PC-3 (cell line): ENCODE measurements at regions of chr3 and their contacts with region 1.

Region 1: GRCh38 chr3:150925751-150926201 is 20.5 kb upstream of the MINDY4B start:
- DNase-seq: peak; percentile 61
- ATAC-seq: peak; percentile 96
- H3K4me3 ChIP-seq: peak overlapping the region; percentile 30; the same call in 1 of the 2 replicates
- H3K27ac ChIP-seq: no peak overlapping the region
- H3K4me1 ChIP-seq: no peaks in the 10 kb centered on the region; the same call in 1 of the 2 replicates
- H3K27me3 ChIP-seq: peaks cover 36% of the 10 kb centered on the region
- CTCF ChIP-seq: peak; percentile 93

Region 2: GRCh38 chr3:151086484-151087456 is 161.0 kb after region 1 on chr3:
- CTCF ChIA-PET with region 1: no interaction called
- POLR2A ChIA-PET with region 1: no interaction called
- intact Hi-C with region 1: loop called (anchors 1 kb)
- DNase-seq: peak; percentile 83
- ATAC-seq: peak; percentile 89
- H3K4me3 ChIP-seq: peak overlapping the region; percentile 73
- H3K27ac ChIP-seq: no peak overlapping the region
- H3K4me1 ChIP-seq: peaks cover 10% of the 10 kb centered on the region
- H3K27me3 ChIP-seq: peaks cover 40% of the 10 kb centered on the region
- CTCF ChIP-seq: peak; percentile 55; the same call in 1 of the 2 replicates